ENCODE measurements at regions of chr11 and their contacts with region 1.

Region 1: DNA sequence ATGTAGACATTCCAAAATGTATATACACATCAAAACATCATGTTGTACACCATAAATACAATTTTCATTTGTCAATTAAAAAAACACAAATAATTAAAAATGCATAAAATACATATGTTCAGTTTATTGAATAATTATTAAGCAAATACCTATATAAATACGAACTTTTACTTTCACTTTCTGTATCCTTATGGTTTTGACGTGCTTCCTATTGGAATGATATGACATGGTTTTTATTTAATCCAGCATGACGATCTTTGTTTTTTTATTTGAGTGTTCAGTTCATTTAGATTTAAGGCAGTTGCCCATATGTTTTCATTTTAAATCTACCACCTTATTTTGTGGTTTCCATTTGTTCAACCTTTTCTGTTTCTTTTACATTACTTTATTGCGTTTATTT is 198.3 kb upstream of the PLET1 start:
- DNase-seq: no peak
- ATAC-seq: no peak
- H3K4me3 ChIP-seq: no peak overlapping the region
- H3K4me3 Mint-ChIP-seq: peak overlapping the region in 2 of 3 donors; percentile 54 to 55
- H3K27ac ChIP-seq: no peak overlapping the region
- H3K27ac Mint-ChIP-seq: no peak overlapping the region
- H3K4me1 ChIP-seq: no peaks in the 10 kb centered on the region
- H3K4me1 Mint-ChIP-seq: peaks cover 0 to 8% (median 5%) of the 10 kb centered on the region in 3 donors
- H3K27me3 ChIP-seq: no peaks in the 10 kb centered on the region
- H3K27me3 Mint-ChIP-seq: peaks cover 0 to 4% of the 10 kb centered on the region in 2 donors

Region 2: GRCh38 chr11:112837162-112837826 is 378.3 kb after region 1 on chr11:
- CTCF ChIA-PET with region 1: no interaction called
- POLR2A ChIA-PET with region 1: no interaction called
- DNase-seq: no peak
- ATAC-seq: no peak
- H3K4me3 ChIP-seq: no peak overlapping the region
- H3K4me3 Mint-ChIP-seq: no peak overlapping the region
- H3K27ac ChIP-seq: no peak overlapping the region
- H3K27ac Mint-ChIP-seq: no peak overlapping the region
- H3K4me1 ChIP-seq: no peaks in the 10 kb centered on the region
- H3K4me1 Mint-ChIP-seq: no peaks in the 10 kb centered on the region
- H3K27me3 ChIP-seq: peaks cover 0 to 10% of the 10 kb centered on the region in 2 experiments
- H3K27me3 Mint-ChIP-seq: peaks cover 4 to 6% of the 10 kb centered on the region in 2 donors

Region 3: DNA sequence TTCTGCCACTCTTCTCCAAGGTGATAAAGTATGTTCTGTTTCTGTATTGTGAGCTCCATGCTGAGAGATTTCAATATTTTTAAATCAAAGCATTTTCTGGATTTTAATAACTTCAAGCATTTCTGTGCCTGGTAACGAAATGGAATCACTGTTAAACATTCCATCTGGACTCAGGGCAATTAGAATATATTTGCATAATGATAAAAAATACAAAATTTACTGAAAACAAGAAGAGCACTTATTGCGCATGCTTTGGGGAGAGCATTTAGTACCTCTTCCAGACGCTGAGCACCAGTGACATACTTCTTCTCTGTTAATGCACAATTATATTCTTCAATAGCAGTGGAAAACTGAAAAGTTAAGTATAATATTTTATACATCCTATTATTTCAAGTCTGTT is 1301.2 kb after region 1 on chr11:
- CTCF ChIA-PET with region 1: interaction called in 1 of 2 experiments, 10 read pairs
- POLR2A ChIA-PET with region 1: no interaction called
- DNase-seq: no peak
- ATAC-seq: no peak
- H3K4me3 ChIP-seq: no peak overlapping the region
- H3K4me3 Mint-ChIP-seq: no peak overlapping the region
- H3K27ac ChIP-seq: no peak overlapping the region
- H3K27ac Mint-ChIP-seq: no peak overlapping the region
- H3K4me1 ChIP-seq: no peaks in the 10 kb centered on the region
- H3K4me1 Mint-ChIP-seq: peaks cover 0 to 11% (median 10%) of the 10 kb centered on the region in 3 donors
- H3K27me3 ChIP-seq: no peaks in the 10 kb centered on the region
- H3K27me3 Mint-ChIP-seq: no peaks in the 10 kb centered on the region